Common myeloid progenitor, CD34-positive (primary cell): ENCODE measurements at regions of chr6 and their contacts with region 1.

Region 1: GRCh38 chr6:37244430-37245310 is 12.9 kb upstream of the TBC1D22B start:
- DNase-seq: no peak
- H3K4me3 ChIP-seq: no peak overlapping the region
- H3K27ac ChIP-seq: peak overlapping the region in 1 of 2 experiments; percentile 2
- H3K4me1 ChIP-seq: peaks cover 0 to 48% (median 8%) of the 10 kb centered on the region in 4 experiments
- H3K27me3 ChIP-seq: no peaks in the 10 kb centered on the region

Region 2: DNA sequence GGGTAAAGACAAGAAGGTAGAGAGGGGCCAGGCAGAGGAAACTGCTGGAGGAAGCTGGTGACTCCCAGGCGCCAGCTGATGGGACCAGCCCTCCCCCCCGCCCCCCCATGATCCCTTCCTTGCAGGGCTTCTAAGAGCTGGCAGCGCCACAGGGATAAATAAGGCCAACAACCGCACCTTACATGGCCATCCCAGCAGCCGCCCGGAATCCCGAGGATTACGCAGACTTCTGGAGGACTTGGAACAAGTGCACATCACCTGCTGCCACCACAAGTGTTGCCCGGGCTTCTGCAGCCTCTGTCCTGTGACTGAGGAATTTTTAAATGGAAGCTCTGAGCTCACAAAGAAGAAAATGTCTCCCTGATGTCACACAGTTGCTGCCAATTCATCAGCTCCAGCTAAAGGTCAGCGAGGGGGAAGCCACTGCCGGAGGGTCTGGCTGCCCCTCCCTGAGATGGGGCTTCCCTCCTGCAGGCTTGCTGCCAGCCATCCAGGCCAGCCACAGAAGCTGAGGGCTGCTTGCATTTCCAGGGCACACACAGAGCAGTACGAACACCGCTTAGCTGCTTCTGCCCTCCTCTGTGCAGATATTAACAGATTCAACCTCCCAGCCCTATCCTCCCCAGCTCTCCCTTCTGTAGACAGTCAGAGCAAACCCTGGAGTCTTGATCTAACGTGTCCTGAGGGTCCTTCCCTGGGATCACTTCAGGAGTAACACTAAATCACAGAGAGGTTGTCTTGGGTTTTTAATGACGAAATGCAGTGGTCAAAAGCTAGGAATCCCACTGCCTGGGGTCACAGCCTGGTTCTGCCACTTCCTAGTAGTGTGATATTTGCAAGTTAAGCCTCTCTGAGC is 113.3 kb before region 1 on chr6:
- CTCF ChIA-PET with region 1: no interaction called
- POLR2A ChIA-PET with region 1: no interaction called
- DNase-seq: no peak
- H3K4me3 ChIP-seq: no peak overlapping the region
- H3K27ac ChIP-seq: no peak overlapping the region
- H3K4me1 ChIP-seq: peaks cover 0 to 21% (median 8%) of the 10 kb centered on the region in 4 experiments
- H3K27me3 ChIP-seq: no peaks in the 10 kb centered on the region

Region 3: GRCh38 chr6:37257634-37258404 is 13.1 kb after region 1 on chr6 and contains the starts of genes TBC1D22B and TMEM217:
- CTCF ChIA-PET with region 1: interaction called, 8 read pairs
- POLR2A ChIA-PET with region 1: interaction called, 10 read pairs
- DNase-seq: peak; percentile 94 to 95 (median 94)
- H3K4me3 ChIP-seq: peak within 1 kb of the TSS; percentile 81 to 96 (median 92)
- H3K27ac ChIP-seq: peak within 1 kb of the TSS; percentile 96 to 98
- H3K4me1 ChIP-seq: peaks cover 22 to 29% (median 25%) of the 10 kb centered on the region in 4 experiments
- H3K27me3 ChIP-seq: no peaks in the 10 kb centered on the region